ENCODE measurements at regions of chr10 and their contacts with region 1.

Region 1: GRCh38 chr10:93376372-93377293 is 105.5 kb downstream of the MYOF start:
- DNase-seq: peak; percentile 54 to 74 (median 60)
- H3K4me3 ChIP-seq: no peak overlapping the region
- H3K27ac ChIP-seq: peak overlapping the region; percentile 5 to 73
- H3K4me1 ChIP-seq: no peaks in the 10 kb centered on the region
- H3K27me3 ChIP-seq: no peaks in the 10 kb centered on the region
- CTCF ChIP-seq: peak; percentile 77 to 96 (median 95)
- EP300 ChIP-seq: no peak
- POLR2A ChIP-seq: no peak

Region 2: DNA sequence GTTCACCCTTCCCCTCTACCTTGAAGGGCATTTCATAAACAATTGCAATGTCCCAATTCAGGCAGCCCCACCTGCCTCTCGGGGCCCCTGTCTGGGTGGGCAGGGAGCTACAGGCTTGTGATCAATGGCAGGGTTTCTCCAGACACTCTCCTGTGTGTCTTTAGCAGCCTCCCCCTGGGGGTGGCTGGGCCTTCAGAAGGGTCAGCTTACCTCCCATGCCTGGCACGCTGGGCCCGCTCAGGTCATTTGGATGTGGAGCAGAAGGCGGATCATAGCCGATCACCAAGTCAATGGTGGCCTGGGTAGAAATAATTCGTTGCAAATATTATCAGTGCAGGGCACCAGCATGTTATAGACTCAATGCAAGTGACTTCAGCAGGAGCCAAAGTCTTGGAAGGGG is 49.2 kb after region 1 on chr10:
- intact Hi-C with region 1: loop called in 1 of 4 experiments (anchors 5 kb)
- DNase-seq: no peak
- H3K4me3 ChIP-seq: no peak overlapping the region
- H3K27ac ChIP-seq: no peak overlapping the region
- H3K4me1 ChIP-seq: peaks cover 7% of the 10 kb centered on the region
- H3K27me3 ChIP-seq: no peaks in the 10 kb centered on the region
- CTCF ChIP-seq: no peak
- EP300 ChIP-seq: no peak
- POLR2A ChIP-seq: no peak

Region 3: GRCh38 chr10:93437088-93437945 is 60.7 kb after region 1 on chr10:
- intact Hi-C with region 1: loop called in 1 of 4 experiments (anchors 5 kb)
- DNase-seq: peak; percentile 73 to 90 (median 82)
- H3K4me3 ChIP-seq: peak overlapping the region; percentile 17
- H3K27ac ChIP-seq: peak overlapping the region; percentile 98 to 100
- H3K4me1 ChIP-seq: peaks cover 20% of the 10 kb centered on the region
- H3K27me3 ChIP-seq: no peaks in the 10 kb centered on the region
- CTCF ChIP-seq: peak in 2 of 3 donors; percentile 11 to 18
- EP300 ChIP-seq: peak; percentile 81
- POLR2A ChIP-seq: peak; percentile 49

Region 4: DNA sequence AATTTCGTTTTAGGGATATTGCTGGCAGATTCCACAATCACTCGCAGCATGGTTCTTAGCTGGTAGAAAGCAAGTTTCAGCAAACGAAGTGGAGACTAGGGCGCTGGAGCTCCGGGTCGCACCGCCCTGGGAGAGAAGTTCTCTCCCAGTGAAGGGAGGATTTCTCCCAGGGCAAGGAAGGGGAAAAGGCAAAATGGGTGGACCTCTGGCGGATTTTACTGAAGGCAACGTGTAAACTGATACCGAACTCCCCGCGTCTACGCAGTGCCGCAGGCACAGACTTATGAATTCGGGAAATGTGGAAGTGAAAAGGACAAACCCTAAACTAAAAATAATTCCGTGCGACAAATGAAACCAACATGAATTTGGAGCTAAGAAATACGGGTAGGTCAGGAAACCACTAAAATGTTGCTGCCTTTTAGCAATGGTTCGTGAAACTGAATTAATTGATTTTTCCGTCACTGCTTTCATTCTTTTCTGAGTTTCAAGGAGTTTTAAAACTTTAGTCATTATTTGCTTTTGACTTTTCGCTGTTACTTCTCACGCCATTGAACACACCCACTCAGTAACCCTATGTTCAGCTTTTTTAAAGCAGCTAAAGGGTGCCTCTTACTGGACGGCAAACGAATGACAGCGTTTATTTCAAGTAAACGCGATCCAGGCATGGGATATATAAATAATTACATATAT is 105.7 kb after region 1 on chr10 and contains the start of gene MYOF:
- intact Hi-C with region 1: loop called (anchors 2 kb)
- DNase-seq: peak; percentile 63 to 73 (median 70)
- H3K4me3 ChIP-seq: peak within 1 kb of the TSS; percentile 44
- H3K27ac ChIP-seq: peak within 1 kb of the TSS; percentile 79 to 87
- H3K4me1 ChIP-seq: peaks cover 5% of the 10 kb centered on the region
- H3K27me3 ChIP-seq: no peaks in the 10 kb centered on the region
- CTCF ChIP-seq: peak; percentile 43 to 80 (median 76)
- EP300 ChIP-seq: no peak
- POLR2A ChIP-seq: peak; percentile 48
- total RNA-seq, gene MYOF: 14.9 to 78.4 (median 45.7) TPM

Measured in ovary (tissue), 10 donors.